Activated CD8-positive, alpha-beta T cell treated with anti-CD3 and anti-CD28 coated beads, Interleukin-2, amount 10 ng/mL, durations not matched to agents 7 days and 5 days (primary cell): ENCODE measurements at regions of chr2 and their contacts with region 1.

Region 1: DNA sequence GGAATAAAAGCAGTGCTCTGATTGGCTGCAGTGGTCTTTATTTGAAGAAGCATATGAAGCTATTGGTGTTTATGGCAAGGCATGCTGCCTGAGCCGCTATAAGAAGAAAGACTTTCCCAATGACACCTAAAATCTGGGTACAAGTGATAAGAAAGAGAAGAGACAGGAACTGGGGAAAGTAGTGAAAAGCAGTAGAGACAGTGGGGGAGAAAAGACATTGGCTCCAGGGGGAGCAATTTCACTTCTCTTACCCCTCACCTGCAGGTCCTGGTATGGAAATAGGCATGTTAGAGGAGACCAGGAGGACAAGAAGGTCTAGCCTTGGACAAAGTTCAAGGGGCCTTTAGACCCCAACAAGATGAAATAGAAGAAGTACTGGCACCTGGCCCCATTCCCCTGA is 47.1 kb downstream of the PLCL1 start:
- DNase-seq: no peak
- ATAC-seq: no peak
- H3K4me3 Mint-ChIP-seq: no peak overlapping the region
- H3K27ac Mint-ChIP-seq: no peak overlapping the region
- H3K4me1 Mint-ChIP-seq: peaks cover 12% of the 10 kb centered on the region
- H3K27me3 Mint-ChIP-seq: peaks cover 3% of the 10 kb centered on the region

Region 2: GRCh38 chr2:197838036-197838435 is 13.4 kb before region 1 on chr2:
- CTCF ChIA-PET with region 1: interaction called, 21 read pairs
- POLR2A ChIA-PET with region 1: no interaction called
- DNase-seq: peak; percentile 35
- ATAC-seq: peak; percentile 93
- H3K4me3 Mint-ChIP-seq: peak overlapping the region; percentile 63
- H3K27ac Mint-ChIP-seq: peak overlapping the region; percentile 62
- H3K4me1 Mint-ChIP-seq: peaks cover 23% of the 10 kb centered on the region
- H3K27me3 Mint-ChIP-seq: peaks cover 4% of the 10 kb centered on the region